Psoas muscle (tissue), 8 donors: ENCODE measurements at regions of chr6 and their contacts with region 1.

Region 1: DNA sequence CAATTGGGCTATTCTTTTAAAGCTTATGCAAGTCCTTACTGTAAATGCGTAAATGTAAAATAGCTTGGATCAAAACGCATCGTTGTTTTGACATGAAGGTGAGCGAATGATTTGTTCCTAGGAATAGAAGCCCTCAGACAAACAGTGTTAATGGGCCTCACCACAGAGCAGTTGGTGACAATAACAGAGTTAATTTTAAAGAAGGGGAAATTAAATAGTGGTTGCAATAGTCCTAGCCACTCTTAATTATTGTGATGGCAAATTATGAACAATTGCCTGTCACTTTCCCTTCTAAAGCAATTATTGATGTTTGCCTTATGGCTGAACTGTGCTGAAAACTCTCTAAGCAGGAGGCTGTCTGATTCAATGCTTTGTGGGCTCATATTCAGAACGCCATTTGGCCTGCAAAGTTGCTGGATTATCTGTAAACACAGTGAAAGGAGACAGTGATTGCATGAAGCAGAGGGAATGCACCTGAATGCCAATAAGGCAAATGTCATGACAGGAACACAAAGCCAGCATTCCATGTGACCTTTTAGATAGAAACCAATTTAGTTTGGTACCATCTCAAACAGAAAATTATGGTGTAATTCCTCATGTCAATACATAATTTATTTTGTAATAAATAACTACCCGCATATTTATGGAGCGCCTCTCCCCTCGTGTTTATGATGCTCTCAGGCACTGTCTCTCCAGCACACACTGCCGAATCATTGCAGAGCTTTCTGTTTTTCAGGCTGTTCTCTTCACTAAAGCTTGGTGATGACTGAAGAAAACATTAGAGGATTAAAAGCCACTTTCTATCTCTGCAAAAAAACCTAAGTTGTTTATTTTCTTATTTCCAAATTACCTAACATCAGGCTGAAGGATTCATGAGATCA is 387.5 kb downstream of the HACE1 start:
- DNase-seq: no peak
- ATAC-seq: no peak
- H3K4me3 ChIP-seq: no peak overlapping the region
- H3K27ac ChIP-seq: no peak overlapping the region
- H3K4me1 ChIP-seq: no peaks in the 10 kb centered on the region
- H3K27me3 ChIP-seq: no peaks in the 10 kb centered on the region
- CTCF ChIP-seq: no peak

Region 2: GRCh38 chr6:104134876-104135275 is 337.4 kb before region 1 on chr6:
- intact Hi-C with region 1: loop called in 1 of 2 experiments (anchors 5 kb)
- DNase-seq: no peak
- ATAC-seq: no peak
- H3K4me3 ChIP-seq: no peak overlapping the region
- H3K27ac ChIP-seq: no peak overlapping the region
- H3K4me1 ChIP-seq: no peaks in the 10 kb centered on the region
- H3K27me3 ChIP-seq: no peaks in the 10 kb centered on the region
- CTCF ChIP-seq: no peak